Naive thymus-derived CD4-positive, alpha-beta T cell (primary cell): ENCODE measurements at regions of chr12 and their contacts with region 1.

Region 1: DNA sequence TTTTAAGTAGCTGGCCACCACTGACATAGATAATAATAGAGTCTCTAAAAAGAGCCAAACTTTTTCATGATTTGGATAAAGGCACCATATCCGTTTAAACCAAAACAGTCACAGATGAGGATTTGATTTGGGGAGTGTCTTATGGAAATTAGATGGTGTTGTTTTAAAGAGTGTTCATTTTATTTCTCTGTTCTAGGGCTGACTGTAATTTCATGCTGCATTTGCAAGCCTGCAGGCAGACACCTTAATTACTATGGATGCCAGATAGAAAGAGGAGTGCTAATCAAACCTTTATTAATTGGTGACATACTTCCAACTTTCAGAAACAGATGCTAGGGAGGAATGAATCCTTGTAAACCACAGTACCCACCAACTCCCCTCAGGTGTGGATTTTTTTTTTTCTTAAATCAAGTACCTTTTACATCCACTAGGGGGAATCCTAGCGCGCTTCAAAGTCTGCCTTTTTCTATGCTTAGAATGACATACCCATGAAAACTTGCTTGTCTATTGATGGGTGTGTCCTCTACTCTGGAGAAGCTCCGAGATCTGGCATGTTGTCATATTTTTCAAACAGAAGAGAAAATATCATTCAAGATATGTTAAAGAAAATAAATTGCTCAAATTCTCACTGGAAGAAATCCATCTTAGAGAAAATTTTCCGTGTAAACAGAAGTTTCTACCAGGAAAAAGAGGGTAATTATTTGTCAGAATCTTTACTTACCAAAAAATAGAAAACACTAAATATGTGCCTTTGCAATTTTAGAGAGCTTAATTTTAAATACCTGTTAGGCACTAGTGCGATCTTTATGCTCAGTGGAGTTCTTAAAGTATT is 14.2 kb upstream of the PLXNC1 start:
- DNase-seq: peak in 7 of 9 donors; percentile 34 to 65 (median 59)
- ATAC-seq: peak; percentile 97
- H3K4me3 ChIP-seq: no peak overlapping the region
- H3K4me3 Mint-ChIP-seq: no peak overlapping the region
- H3K27ac ChIP-seq: no peak overlapping the region
- H3K27ac Mint-ChIP-seq: peak overlapping the region in 2 of 9 donors; percentile 16 to 28
- H3K4me1 ChIP-seq: no peaks in the 10 kb centered on the region
- H3K4me1 Mint-ChIP-seq: peaks cover 0 to 10% (median 4%) of the 10 kb centered on the region in 7 donors
- H3K27me3 ChIP-seq: no peaks in the 10 kb centered on the region
- H3K27me3 Mint-ChIP-seq: peaks cover 0 to 11% (median 0%) of the 10 kb centered on the region in 5 donors

Region 2: DNA sequence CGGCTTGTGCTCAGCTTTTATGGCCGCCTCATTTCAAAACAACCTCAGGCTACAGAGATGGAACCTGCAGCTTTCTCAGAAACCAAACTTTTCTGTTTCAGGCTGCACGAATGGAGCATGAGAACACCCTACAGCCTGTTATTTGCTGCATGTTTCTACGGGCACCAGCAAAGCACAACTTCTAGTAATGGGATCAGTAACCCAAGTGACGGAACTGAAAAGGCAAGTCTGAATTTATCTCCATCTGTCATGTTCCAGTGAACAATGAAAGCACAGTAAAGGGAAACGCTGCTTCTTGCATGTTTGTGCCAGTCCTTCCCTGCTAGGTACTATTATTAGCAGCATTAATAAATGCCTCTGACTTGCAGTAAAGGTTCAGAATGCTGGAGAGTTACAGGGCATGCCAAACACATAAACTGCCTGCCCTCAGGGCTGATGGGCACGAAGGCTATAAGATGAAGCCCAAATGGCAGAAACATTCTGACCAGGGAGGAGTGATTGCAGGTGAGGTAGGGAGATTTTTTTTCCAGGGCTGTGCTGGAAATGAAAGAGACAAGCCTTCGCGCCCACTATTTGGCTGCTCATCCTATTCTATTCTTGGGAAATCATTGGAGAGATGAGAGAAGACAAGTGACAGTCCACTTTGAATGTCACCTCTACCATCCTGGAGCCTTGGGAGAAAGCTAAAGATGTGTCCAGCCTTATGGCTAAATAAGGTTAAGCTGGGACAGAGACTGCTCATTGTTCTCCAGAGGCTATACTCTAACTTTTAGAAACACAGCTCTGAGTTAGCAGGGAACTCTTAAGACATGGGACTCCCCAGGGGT is 86.2 kb before region 1 on chr12:
- CTCF ChIA-PET with region 1: no interaction called
- POLR2A ChIA-PET with region 1: no interaction called
- intact Hi-C with region 1: no loop called
- DNase-seq: peak in 1 of 9 donors; percentile 23
- ATAC-seq: no peak
- H3K4me3 ChIP-seq: no peak overlapping the region
- H3K4me3 Mint-ChIP-seq: peak overlapping the region in 5 of 10 donors; percentile 17 to 48 (median 24)
- H3K27ac ChIP-seq: no peak overlapping the region
- H3K27ac Mint-ChIP-seq: peak overlapping the region in 7 of 9 donors; percentile 20 to 87 (median 38)
- H3K4me1 ChIP-seq: peaks cover 0 to 7% of the 10 kb centered on the region in 2 donors
- H3K4me1 Mint-ChIP-seq: peaks cover 2 to 34% (median 28%) of the 10 kb centered on the region in 7 donors
- H3K27me3 ChIP-seq: no peaks in the 10 kb centered on the region
- H3K27me3 Mint-ChIP-seq: peaks cover 0 to 2% (median 0%) of the 10 kb centered on the region in 5 donors

Region 3: GRCh38 chr12:94254270-94254669 is 120.1 kb after region 1 on chr12:
- CTCF ChIA-PET with region 1: no interaction called
- POLR2A ChIA-PET with region 1: no interaction called
- intact Hi-C with region 1: no loop called
- DNase-seq: no peak
- ATAC-seq: no peak
- H3K4me3 ChIP-seq: no peak overlapping the region
- H3K4me3 Mint-ChIP-seq: no peak overlapping the region
- H3K27ac ChIP-seq: no peak overlapping the region
- H3K27ac Mint-ChIP-seq: peak overlapping the region in 1 of 9 donors; percentile 80
- H3K4me1 ChIP-seq: no peaks in the 10 kb centered on the region
- H3K4me1 Mint-ChIP-seq: peaks cover 0 to 2% (median 0%) of the 10 kb centered on the region in 7 donors
- H3K27me3 ChIP-seq: no peaks in the 10 kb centered on the region
- H3K27me3 Mint-ChIP-seq: no peaks in the 10 kb centered on the region

Region 4: DNA sequence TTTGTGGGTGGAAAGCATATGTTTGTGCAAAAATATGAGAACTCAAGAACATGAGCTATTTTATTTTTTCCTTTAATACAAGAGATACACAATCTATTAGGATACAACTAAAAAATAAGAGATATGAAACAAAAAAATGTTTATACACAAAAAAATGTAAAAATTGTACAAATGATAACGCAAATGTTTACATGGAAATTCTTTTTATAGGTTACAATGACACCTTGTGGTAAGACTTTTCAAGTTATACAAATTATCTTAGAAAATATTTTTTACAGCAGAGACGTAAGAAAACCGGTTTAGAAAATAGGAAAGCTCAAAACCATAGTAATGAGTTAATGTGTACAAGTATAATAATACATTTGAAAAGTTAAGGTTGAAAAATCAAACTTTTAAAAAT is 300.0 kb after region 1 on chr12:
- CTCF ChIA-PET with region 1: no interaction called
- POLR2A ChIA-PET with region 1: no interaction called
- intact Hi-C with region 1: loop called (anchors 1 kb)
- DNase-seq: no peak
- ATAC-seq: no peak
- H3K4me3 ChIP-seq: no peak overlapping the region
- H3K4me3 Mint-ChIP-seq: no peak overlapping the region
- H3K27ac ChIP-seq: no peak overlapping the region
- H3K27ac Mint-ChIP-seq: no peak overlapping the region
- H3K4me1 ChIP-seq: peaks cover 0 to 9% of the 10 kb centered on the region in 2 donors
- H3K4me1 Mint-ChIP-seq: peaks cover 12 to 27% (median 22%) of the 10 kb centered on the region in 7 donors
- H3K27me3 ChIP-seq: no peaks in the 10 kb centered on the region
- H3K27me3 Mint-ChIP-seq: no peaks in the 10 kb centered on the region

Region 5: GRCh38 chr12:94649349-94650142 is 515.4 kb after region 1 on chr12:
- CTCF ChIA-PET with region 1: no interaction called
- POLR2A ChIA-PET with region 1: no interaction called
- intact Hi-C with region 1: loop called in 1 of 2 experiments (anchors 5 kb)
- DNase-seq: peak in 7 of 9 donors; percentile 21 to 48 (median 31)
- ATAC-seq: peak; percentile 80
- H3K4me3 ChIP-seq: peak overlapping the region; percentile 37
- H3K4me3 Mint-ChIP-seq: peak overlapping the region; percentile 65 to 85 (median 83)
- H3K27ac ChIP-seq: no peak overlapping the region
- H3K27ac Mint-ChIP-seq: no peak overlapping the region
- H3K4me1 ChIP-seq: no peaks in the 10 kb centered on the region
- H3K4me1 Mint-ChIP-seq: peaks cover 9 to 19% (median 16%) of the 10 kb centered on the region in 7 donors
- H3K27me3 ChIP-seq: peaks cover 3 to 10% of the 10 kb centered on the region in 2 donors
- H3K27me3 Mint-ChIP-seq: peaks cover 49 to 81% (median 56%) of the 10 kb centered on the region in 5 donors

Region 6: GRCh38 chr12:94676031-94676641 is 542.0 kb after region 1 on chr12:
- CTCF ChIA-PET with region 1: no interaction called
- POLR2A ChIA-PET with region 1: no interaction called
- intact Hi-C with region 1: no loop called
- DNase-seq: peak in 6 of 9 donors; percentile 17 to 50 (median 38)
- ATAC-seq: peak; percentile 92
- H3K4me3 ChIP-seq: peak overlapping the region; percentile 36
- H3K4me3 Mint-ChIP-seq: peak overlapping the region in 9 of 10 donors; percentile 1 to 63 (median 14)
- H3K27ac ChIP-seq: no peak overlapping the region
- H3K27ac Mint-ChIP-seq: peak overlapping the region in 8 of 9 donors; percentile 41 to 89 (median 66)
- H3K4me1 ChIP-seq: peaks cover 10 to 29% of the 10 kb centered on the region in 2 donors
- H3K4me1 Mint-ChIP-seq: peaks cover 15 to 29% (median 16%) of the 10 kb centered on the region in 7 donors
- H3K27me3 ChIP-seq: no peaks in the 10 kb centered on the region
- H3K27me3 Mint-ChIP-seq: peaks cover 4 to 26% (median 12%) of the 10 kb centered on the region in 5 donors

Region 7: DNA sequence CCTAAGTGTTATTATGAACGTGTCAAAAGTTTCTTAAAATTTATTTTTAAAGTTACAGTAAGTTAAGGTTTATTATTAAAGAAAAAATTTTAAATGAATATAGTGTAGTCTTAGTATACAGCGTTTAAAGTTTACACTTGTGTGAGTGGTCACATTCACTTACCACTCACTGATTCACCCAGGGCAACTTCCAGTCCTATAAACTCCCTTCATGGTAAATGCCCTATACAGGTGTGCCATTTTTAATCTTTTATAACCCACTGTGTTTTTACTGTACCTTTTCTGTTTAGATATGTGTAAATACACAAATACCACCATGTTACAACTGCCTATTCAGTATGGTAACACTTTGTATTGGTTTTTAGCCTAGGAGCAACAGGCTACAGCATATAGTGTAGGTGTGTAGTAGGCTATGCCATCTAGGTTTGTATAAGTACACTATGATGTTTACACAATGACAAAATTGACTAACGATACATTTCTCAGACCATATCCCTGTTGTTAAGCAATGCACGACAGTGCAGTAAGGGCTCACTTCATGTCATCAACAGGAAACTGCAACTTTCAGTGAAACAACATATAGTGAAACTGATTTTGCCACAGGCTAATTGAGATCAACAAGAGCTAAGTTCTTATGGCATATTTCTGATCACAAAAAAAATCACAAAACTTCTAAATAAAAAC is 628.2 kb after region 1 on chr12:
- CTCF ChIA-PET with region 1: no interaction called
- POLR2A ChIA-PET with region 1: no interaction called
- intact Hi-C with region 1: loop called (anchors 1 to 5 kb)
- DNase-seq: no peak
- ATAC-seq: peak; percentile 22
- H3K4me3 ChIP-seq: no peak overlapping the region
- H3K4me3 Mint-ChIP-seq: peak overlapping the region in 1 of 10 donors; percentile 17
- H3K27ac ChIP-seq: no peak overlapping the region
- H3K27ac Mint-ChIP-seq: peak overlapping the region in 2 of 9 donors; percentile 7 to 36
- H3K4me1 ChIP-seq: no peaks in the 10 kb centered on the region
- H3K4me1 Mint-ChIP-seq: peaks cover 0 to 12% (median 2%) of the 10 kb centered on the region in 7 donors
- H3K27me3 ChIP-seq: no peaks in the 10 kb centered on the region
- H3K27me3 Mint-ChIP-seq: peaks cover 0 to 16% (median 9%) of the 10 kb centered on the region in 5 donors